MCF 10A (cell line): ENCODE measurements at regions of chr3 and their contacts with region 1.

Region 1: DNA sequence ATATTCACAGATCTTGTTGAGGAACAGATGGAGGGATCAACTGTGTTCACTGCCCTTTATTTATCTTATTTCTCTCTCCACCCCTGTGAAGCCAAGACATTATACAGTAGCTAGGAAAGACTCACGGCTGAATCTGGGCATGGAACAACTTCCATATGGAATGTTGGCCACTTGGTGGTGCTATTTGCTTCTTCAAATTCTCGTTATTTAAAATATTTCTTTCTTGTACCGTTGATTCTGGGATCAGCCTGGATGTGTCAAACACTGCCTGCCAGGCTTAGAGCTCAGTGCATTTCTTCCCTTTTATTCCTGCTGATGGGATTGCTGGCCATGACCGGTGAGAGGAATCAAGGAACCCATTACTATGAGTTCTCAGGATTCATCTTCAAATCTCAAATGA is 17.5 kb upstream of the GASK1A start:
- DNase-seq: peak; percentile 64
- H3K4me3 Mint-ChIP-seq: no peak overlapping the region
- H3K27ac Mint-ChIP-seq: no peak overlapping the region
- H3K4me1 Mint-ChIP-seq: no peaks in the 10 kb centered on the region
- H3K27me3 Mint-ChIP-seq: peaks cover 67% of the 10 kb centered on the region
- CTCF ChIP-seq: peak; percentile 56

Region 2: DNA sequence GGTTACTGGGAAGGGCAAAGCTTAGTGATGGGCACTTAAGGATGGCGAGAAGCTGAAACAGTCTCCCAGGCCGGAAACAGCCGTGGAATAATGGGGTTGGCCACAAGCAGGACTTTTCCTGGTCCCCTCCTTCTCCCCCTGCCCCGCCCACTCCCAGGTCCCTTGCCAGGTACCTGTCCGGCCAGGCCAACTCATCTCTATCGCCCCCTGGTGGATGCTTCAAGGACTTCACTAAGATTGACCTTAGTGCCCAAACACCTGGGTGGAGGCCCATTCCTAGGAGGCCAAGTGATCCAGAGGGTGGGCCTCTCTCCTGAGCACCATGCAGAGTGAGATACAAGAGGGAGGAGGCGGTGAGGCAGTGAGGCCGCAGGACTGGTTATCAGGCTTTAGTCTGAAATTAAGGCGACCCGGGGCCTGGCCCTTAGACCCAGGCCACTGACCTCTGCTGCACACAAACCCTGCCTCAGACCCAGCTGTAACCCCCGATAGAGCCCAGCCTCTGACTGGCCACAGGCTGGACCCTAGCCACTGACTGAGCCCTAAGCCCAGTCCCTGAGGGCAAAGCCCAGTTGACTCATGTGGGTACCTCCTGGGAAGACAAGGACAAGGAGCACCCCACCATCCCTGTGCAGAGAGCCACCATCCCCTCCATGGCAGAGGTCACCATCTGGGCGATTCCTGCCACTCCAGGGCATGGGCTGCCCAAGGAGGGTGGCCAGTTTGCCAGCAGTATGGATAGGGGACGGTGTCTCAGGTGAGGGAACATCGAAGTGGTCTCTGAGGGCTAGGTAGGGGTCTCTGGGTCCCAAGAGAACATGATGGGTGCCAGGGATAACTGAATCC is 421.5 kb before region 1 on chr3:
- CTCF ChIA-PET with region 1: no interaction called
- POLR2A ChIA-PET with region 1: no interaction called
- intact Hi-C with region 1: no loop called
- DNase-seq: peak; percentile 70
- H3K4me3 Mint-ChIP-seq: no peak overlapping the region
- H3K27ac Mint-ChIP-seq: no peak overlapping the region
- H3K4me1 Mint-ChIP-seq: no peaks in the 10 kb centered on the region
- H3K27me3 Mint-ChIP-seq: no peaks in the 10 kb centered on the region
- CTCF ChIP-seq: peak; percentile 87

Region 3: DNA sequence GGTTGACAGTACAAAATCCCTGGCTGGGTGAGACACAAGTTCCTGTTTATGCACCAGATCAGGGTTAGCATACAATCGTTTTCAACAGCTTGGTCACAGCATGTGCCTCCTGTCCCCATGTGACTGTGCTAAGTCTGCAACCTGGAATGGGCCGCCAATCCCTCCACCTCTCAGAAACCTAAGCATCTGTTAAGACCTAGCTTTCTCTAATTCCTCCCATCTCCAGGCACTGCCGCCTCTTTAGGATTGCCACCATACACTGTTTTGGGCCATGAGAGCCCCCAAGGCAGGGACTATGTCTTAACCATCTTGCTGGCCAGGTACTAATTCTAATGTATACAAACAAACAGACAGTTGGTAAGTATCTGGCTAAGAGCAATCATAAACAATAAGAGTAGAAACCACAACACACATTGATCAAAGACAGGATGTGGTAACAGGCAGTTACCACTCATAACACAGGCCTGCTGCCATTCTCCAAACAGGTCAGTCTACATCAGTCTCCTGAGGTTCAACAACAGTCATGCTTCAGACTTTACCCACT is 405.5 kb before region 1 on chr3:
- CTCF ChIA-PET with region 1: no interaction called
- POLR2A ChIA-PET with region 1: no interaction called
- intact Hi-C with region 1: no loop called
- DNase-seq: no peak
- H3K4me3 Mint-ChIP-seq: no peak overlapping the region
- H3K27ac Mint-ChIP-seq: no peak overlapping the region
- H3K4me1 Mint-ChIP-seq: no peaks in the 10 kb centered on the region
- H3K27me3 Mint-ChIP-seq: no peaks in the 10 kb centered on the region
- CTCF ChIP-seq: no peak

Region 4: GRCh38 chr3:42926310-42926709 is 35.3 kb before region 1 on chr3:
- CTCF ChIA-PET with region 1: no interaction called
- POLR2A ChIA-PET with region 1: no interaction called
- intact Hi-C with region 1: no loop called
- DNase-seq: no peak
- H3K4me3 Mint-ChIP-seq: no peak overlapping the region
- H3K27ac Mint-ChIP-seq: no peak overlapping the region
- H3K4me1 Mint-ChIP-seq: no peaks in the 10 kb centered on the region
- H3K27me3 Mint-ChIP-seq: peaks cover 22% of the 10 kb centered on the region
- CTCF ChIP-seq: no peak

Region 5: GRCh38 chr3:42946050-42946449 is 15.6 kb before region 1 on chr3:
- CTCF ChIA-PET with region 1: interaction called, 11 read pairs
- POLR2A ChIA-PET with region 1: interaction called, 3 read pairs
- intact Hi-C with region 1: no loop called
- DNase-seq: no peak
- H3K4me3 Mint-ChIP-seq: no peak overlapping the region
- H3K27ac Mint-ChIP-seq: no peak overlapping the region
- H3K4me1 Mint-ChIP-seq: no peaks in the 10 kb centered on the region
- H3K27me3 Mint-ChIP-seq: peaks cover 10% of the 10 kb centered on the region
- CTCF ChIP-seq: no peak

Region 6: DNA sequence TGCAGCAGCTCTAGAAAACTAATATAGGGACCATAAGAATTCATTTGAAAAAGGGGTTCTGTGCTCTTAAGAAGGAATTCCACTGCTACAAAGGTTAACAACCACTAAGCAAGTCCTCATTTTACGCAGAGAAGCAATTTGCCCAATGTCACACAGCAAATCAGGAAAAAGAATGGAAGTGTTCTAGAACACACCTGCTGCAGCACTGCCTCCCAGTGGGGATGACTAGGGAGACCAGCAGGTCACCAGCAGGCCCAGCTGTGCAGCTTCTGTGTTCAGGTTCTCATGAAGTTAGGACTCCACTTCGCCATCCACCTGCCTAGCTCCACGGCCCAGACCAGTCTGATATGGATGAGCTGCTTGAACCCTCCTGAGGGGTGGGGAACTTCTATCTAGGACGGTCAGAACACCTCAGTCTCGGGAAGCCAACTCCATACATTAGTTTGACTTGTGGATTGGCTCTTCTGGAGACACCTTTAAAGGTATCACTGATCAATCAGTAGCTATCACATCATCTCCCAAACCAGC is 125.7 kb after region 1 on chr3:
- CTCF ChIA-PET with region 1: interaction called, 68 read pairs
- POLR2A ChIA-PET with region 1: interaction called, 3 read pairs
- intact Hi-C with region 1: loop called (anchors 1 kb)
- DNase-seq: peak; percentile 17
- H3K4me3 Mint-ChIP-seq: no peak overlapping the region
- H3K27ac Mint-ChIP-seq: no peak overlapping the region
- H3K4me1 Mint-ChIP-seq: no peaks in the 10 kb centered on the region
- H3K27me3 Mint-ChIP-seq: no peaks in the 10 kb centered on the region
- CTCF ChIP-seq: no peak

Region 7: GRCh38 chr3:43128464-43128863 is 166.8 kb after region 1 on chr3:
- CTCF ChIA-PET with region 1: interaction called, 15 read pairs
- POLR2A ChIA-PET with region 1: no interaction called
- intact Hi-C with region 1: no loop called
- DNase-seq: no peak
- H3K4me3 Mint-ChIP-seq: no peak overlapping the region
- H3K27ac Mint-ChIP-seq: no peak overlapping the region
- H3K4me1 Mint-ChIP-seq: no peaks in the 10 kb centered on the region
- H3K27me3 Mint-ChIP-seq: peaks cover 6% of the 10 kb centered on the region
- CTCF ChIP-seq: no peak

Region 8: GRCh38 chr3:43155464-43156121 is 194.0 kb after region 1 on chr3:
- CTCF ChIA-PET with region 1: interaction called, 262 read pairs
- POLR2A ChIA-PET with region 1: interaction called, 20 read pairs
- intact Hi-C with region 1: loop called (anchors 1 kb)
- DNase-seq: peak; percentile 88
- H3K4me3 Mint-ChIP-seq: no peak overlapping the region
- H3K27ac Mint-ChIP-seq: no peak overlapping the region
- H3K4me1 Mint-ChIP-seq: peaks cover 9% of the 10 kb centered on the region
- H3K27me3 Mint-ChIP-seq: peaks cover 12% of the 10 kb centered on the region
- CTCF ChIP-seq: peak; percentile 66

Region 9: DNA sequence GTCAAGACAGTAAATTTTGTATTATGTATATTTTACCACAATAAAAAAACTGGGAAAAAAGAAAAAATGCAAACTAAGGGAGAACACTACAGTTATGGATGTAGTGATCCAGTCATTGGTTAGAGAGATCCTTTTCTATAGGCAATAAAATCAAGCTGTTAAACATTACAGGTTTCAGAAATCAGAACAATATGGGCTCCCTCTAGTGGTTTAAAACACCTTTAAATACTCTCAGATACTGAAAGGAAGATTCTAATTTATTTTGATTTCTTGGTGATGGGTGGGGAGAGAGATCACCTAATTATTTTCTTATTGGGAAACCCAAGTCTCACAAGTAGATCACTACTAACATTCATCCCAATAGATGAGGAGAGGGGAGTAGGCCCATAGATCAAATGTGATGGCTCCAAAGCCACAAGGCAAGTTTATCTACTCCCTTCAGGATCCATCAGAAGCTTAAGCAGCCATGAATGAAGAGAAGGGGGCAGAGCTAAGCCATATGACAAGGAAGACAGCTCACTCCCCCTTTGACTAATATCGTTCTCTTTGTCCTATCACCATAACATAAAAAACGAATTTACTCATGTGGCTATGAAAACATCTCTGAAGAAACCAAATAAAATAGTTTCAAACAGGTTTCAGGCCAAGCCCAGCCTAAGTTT is 541.6 kb after region 1 on chr3:
- CTCF ChIA-PET with region 1: interaction called, 39 read pairs
- POLR2A ChIA-PET with region 1: no interaction called
- intact Hi-C with region 1: loop called (anchors 5 kb)
- DNase-seq: peak; percentile 37
- H3K4me3 Mint-ChIP-seq: no peak overlapping the region
- H3K27ac Mint-ChIP-seq: no peak overlapping the region
- H3K4me1 Mint-ChIP-seq: peaks cover 4% of the 10 kb centered on the region
- H3K27me3 Mint-ChIP-seq: no peaks in the 10 kb centered on the region
- CTCF ChIP-seq: peak; percentile 51